ENCODE measurements at regions of chr15 and their contacts with region 1.

Region 1: DNA sequence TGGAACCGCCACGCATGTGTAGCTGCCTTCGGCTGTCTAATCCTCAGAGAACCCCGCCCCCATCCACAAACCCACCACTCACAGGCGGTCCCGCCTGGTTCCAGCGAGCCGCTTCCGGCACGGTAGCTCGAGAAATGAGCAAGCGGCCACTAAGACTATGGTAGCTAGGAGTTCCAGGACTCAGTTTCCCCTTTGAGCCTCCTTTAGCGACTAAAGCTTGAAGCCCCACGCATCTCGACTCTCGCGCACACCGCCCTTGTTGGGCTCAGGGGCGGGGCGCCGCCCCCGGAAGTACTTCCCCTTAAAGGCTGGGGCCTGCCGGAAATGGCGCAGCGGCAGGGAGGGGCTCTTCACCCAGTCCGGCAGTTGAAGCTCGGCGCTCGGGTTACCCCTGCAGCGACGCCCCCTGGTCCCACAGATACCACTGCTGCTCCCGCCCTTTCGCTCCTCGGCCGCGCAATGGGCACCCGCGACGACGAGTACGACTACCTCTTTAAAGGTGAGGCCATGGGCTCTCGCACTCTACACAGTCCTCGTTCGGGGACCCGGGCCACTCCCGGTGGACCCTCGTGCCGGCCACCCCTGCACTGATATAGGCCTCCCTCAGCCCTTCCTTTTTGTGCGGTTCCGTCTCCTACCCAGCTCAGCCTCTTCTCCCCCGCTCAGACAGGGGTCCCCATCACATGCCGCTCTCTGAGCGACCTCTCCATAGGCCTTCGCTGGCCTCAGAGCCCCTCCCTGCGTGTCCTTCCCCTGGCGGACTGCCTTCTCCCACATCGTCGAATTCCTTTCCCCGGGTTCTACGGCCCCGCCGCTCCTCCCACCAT is at the start of gene RAB11A:
- DNase-seq: peak; percentile 92 to 97 (median 96)
- H3K4me3 ChIP-seq: peak within 1 kb of the TSS; percentile 97
- H3K4me3 Mint-ChIP-seq: peak within 1 kb of the TSS; percentile 97 to 100 (median 99)
- H3K27ac ChIP-seq: peak within 1 kb of the TSS; percentile 96
- H3K27ac Mint-ChIP-seq: peak within 1 kb of the TSS; percentile 97 to 100 (median 98)
- H3K4me1 ChIP-seq: peaks cover 25% of the 10 kb centered on the region
- H3K4me1 Mint-ChIP-seq: peaks cover 25 to 45% (median 43%) of the 10 kb centered on the region in 3 donors
- H3K27me3 ChIP-seq: no peaks in the 10 kb centered on the region
- H3K27me3 Mint-ChIP-seq: peaks cover 0 to 12% of the 10 kb centered on the region in 2 donors
- total RNA-seq, gene RAB11A: 158 to 159 TPM

Region 2: GRCh38 chr15:65610871-65611718 is 258.2 kb before region 1 on chr15 and contains the start of gene INTS14:
- CTCF ChIA-PET with region 1: interaction called, 9 read pairs
- POLR2A ChIA-PET with region 1: interaction called, 14 read pairs
- DNase-seq: peak; percentile 83 to 90 (median 88)
- H3K4me3 ChIP-seq: peak within 1 kb of the TSS; percentile 89
- H3K4me3 Mint-ChIP-seq: peak within 1 kb of the TSS; percentile 93 to 98 (median 95)
- H3K27ac ChIP-seq: peak within 1 kb of the TSS; percentile 91
- H3K27ac Mint-ChIP-seq: peak within 1 kb of the TSS; percentile 97 to 99 (median 98)
- H3K4me1 ChIP-seq: peaks cover 26% of the 10 kb centered on the region
- H3K4me1 Mint-ChIP-seq: peaks cover 35 to 64% (median 53%) of the 10 kb centered on the region in 3 donors
- H3K27me3 ChIP-seq: no peaks in the 10 kb centered on the region
- H3K27me3 Mint-ChIP-seq: peaks cover 0 to 2% of the 10 kb centered on the region in 2 donors
- total RNA-seq, gene INTS14: 62.0 to 64.7 TPM

Region 3: DNA sequence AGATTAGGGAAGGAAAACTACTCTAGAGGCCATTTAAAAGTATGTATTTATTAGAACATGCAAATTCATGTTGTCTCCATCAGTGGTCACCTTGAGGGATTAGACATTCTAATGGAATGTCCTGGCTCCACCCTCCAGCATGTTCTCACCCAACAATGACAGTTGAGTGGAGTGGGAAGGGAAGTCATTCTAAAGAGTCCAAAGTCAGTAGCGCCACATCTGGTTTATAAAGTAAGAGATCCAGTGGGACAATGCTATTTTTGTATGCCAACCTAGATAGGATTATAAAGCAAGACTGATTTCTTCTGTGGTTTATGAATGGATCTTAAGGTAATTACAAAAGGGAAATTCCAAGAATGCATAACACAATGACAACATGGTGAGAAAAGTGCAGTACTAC is 214.3 kb before region 1 on chr15:
- CTCF ChIA-PET with region 1: no interaction called
- POLR2A ChIA-PET with region 1: no interaction called
- DNase-seq: no peak
- H3K4me3 ChIP-seq: no peak overlapping the region
- H3K4me3 Mint-ChIP-seq: no peak overlapping the region
- H3K27ac ChIP-seq: no peak overlapping the region
- H3K27ac Mint-ChIP-seq: peak overlapping the region in 1 of 8 donors; percentile 87
- H3K4me1 ChIP-seq: no peaks in the 10 kb centered on the region
- H3K4me1 Mint-ChIP-seq: peaks cover 4 to 5% (median 5%) of the 10 kb centered on the region in 3 donors
- H3K27me3 ChIP-seq: no peaks in the 10 kb centered on the region
- H3K27me3 Mint-ChIP-seq: no peaks in the 10 kb centered on the region

Region 4: GRCh38 chr15:65730549-65731172 is 138.7 kb before region 1 on chr15:
- CTCF ChIA-PET with region 1: no interaction called
- POLR2A ChIA-PET with region 1: no interaction called
- DNase-seq: no peak
- H3K4me3 ChIP-seq: no peak overlapping the region
- H3K4me3 Mint-ChIP-seq: no peak overlapping the region
- H3K27ac ChIP-seq: no peak overlapping the region
- H3K27ac Mint-ChIP-seq: peak overlapping the region in 4 of 8 donors; percentile 2 to 22 (median 14)
- H3K4me1 ChIP-seq: no peaks in the 10 kb centered on the region
- H3K4me1 Mint-ChIP-seq: peaks cover 2 to 17% (median 5%) of the 10 kb centered on the region in 3 donors
- H3K27me3 ChIP-seq: no peaks in the 10 kb centered on the region
- H3K27me3 Mint-ChIP-seq: no peaks in the 10 kb centered on the region

Measured in CD8-positive, alpha-beta memory T cell (primary cell).